H1 (cell line): ENCODE measurements at regions of chr17 and their contacts with region 1.

Region 1: DNA sequence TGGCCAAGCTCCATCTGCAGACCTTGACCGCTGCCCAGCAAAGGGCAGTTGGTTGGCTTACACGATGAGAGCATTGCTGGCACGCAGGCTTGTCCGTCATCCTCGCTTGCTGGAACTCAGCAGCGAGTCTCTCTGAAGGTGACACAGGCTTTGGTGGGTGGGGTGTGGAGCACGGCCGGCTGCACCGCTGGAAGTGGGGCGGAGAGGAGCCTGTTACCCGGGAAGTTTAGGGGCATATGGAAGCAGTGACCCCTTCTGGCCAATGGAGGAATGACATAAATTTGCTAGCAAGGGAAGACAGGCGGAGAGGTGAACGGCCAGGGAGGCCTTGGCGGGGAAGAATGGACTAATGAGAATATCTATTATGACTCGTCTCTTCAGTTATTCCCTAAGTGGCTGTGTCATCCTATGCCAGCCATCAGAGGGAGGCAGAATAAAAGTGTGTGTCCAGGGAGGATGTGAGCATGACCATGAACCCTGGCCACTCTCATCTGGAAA is 65.9 kb upstream of the SDK2 start:
- DNase-seq: peak; percentile 39 to 93
- H3K4me3 ChIP-seq: no peak overlapping the region; a peak in 1 of 8 replicates
- H3K27ac ChIP-seq: no peak overlapping the region
- H3K4me1 ChIP-seq: peaks cover 0 to 4% (median 3%) of the 10 kb centered on the region in 4 experiments; a peak in 5 of 7 replicates
- H3K27me3 ChIP-seq: peaks cover 0 to 4% (median under 1%) of the 10 kb centered on the region in 4 experiments; a peak in 3 of 7 replicates
- CTCF ChIP-seq: peak; percentile 76 to 89 (median 85)
- EP300 ChIP-seq: no peak
- POLR2A ChIP-seq: no peak
- RAD21 ChIP-seq: peak; percentile 93 to 95

Region 2: DNA sequence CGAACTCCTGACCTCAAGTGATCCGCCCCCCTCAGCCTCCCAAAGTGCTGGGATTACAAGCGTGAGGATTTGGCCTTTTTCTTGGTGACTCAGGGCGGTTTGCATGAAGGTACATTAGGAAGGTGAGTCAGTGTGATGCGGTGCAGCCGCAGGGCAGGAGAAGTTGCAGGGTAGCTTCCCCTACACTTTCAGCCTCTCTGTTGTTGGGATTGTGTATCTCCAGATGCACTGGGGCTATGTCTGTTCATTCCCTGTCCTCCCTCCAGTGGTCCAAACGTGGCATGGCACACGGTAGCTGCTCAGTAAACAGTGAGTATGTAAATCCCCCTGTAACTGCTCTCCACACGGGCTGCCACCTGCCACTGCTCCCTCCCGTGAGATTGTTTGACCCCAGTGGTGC is 289.2 kb before region 1 on chr17:
- CTCF ChIA-PET with region 1: interaction called, 11 read pairs
- POLR2A ChIA-PET with region 1: no interaction called
- DNase-seq: no peak
- H3K4me3 ChIP-seq: no peak overlapping the region
- H3K27ac ChIP-seq: no peak overlapping the region
- H3K4me1 ChIP-seq: no peaks in the 10 kb centered on the region
- H3K27me3 ChIP-seq: no peaks in the 10 kb centered on the region
- CTCF ChIP-seq: peak; percentile 18 to 54 (median 52); a peak in 3 of 4 replicates
- EP300 ChIP-seq: no peak
- POLR2A ChIP-seq: no peak
- RAD21 ChIP-seq: peak; percentile 25 to 50

Region 3: DNA sequence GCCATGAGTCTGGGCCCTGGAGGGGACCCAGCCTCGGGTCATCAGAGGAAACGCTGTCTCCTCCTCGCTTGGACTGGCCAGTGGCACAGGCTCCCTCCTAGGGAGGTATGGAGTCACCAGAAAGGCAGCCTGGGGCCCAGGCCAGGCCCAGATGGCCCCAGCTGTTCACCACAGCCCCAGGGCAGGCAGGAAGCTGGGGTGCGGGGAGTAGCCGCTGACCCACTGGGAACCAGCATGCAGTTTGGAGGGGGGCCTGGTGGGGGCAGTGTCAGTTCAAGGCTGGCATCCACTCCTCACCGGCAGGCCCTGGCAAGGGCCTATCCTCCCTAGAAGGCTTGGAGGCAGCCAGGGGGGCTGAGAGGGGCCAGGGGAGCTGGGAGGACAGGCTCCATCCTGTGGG is 114.7 kb before region 1 on chr17:
- CTCF ChIA-PET with region 1: interaction called, 10 read pairs
- POLR2A ChIA-PET with region 1: no interaction called
- DNase-seq: peak in 1 of 2 experiments; percentile 85
- H3K4me3 ChIP-seq: no peak overlapping the region
- H3K27ac ChIP-seq: no peak overlapping the region
- H3K4me1 ChIP-seq: peaks cover 0 to 5% (median 2%) of the 10 kb centered on the region in 4 experiments; a peak in 5 of 7 replicates
- H3K27me3 ChIP-seq: no peaks in the 10 kb centered on the region
- CTCF ChIP-seq: peak; percentile 68 to 74 (median 71)
- EP300 ChIP-seq: no peak
- POLR2A ChIP-seq: no peak
- RAD21 ChIP-seq: peak; percentile 76 to 87

Region 4: GRCh38 chr17:73690676-73691075 is 19.5 kb before region 1 on chr17:
- CTCF ChIA-PET with region 1: interaction called, 33 read pairs
- POLR2A ChIA-PET with region 1: no interaction called
- DNase-seq: peak in 1 of 2 experiments; percentile 47
- H3K4me3 ChIP-seq: no peak overlapping the region
- H3K27ac ChIP-seq: no peak overlapping the region
- H3K4me1 ChIP-seq: peaks cover 2 to 17% (median 8%) of the 10 kb centered on the region in 4 experiments; a peak in 5 of 7 replicates
- H3K27me3 ChIP-seq: no peaks in the 10 kb centered on the region; a peak in 1 of 7 replicates
- CTCF ChIP-seq: no peak
- EP300 ChIP-seq: no peak
- POLR2A ChIP-seq: no peak
- RAD21 ChIP-seq: no peak

Region 5: GRCh38 chr17:73782641-73783381 is 72.7 kb after region 1 on chr17:
- CTCF ChIA-PET with region 1: interaction called, 19 read pairs
- POLR2A ChIA-PET with region 1: no interaction called
- DNase-seq: no peak
- H3K4me3 ChIP-seq: no peak overlapping the region
- H3K27ac ChIP-seq: no peak overlapping the region
- H3K4me1 ChIP-seq: peaks cover 7 to 32% (median 16%) of the 10 kb centered on the region in 4 experiments
- H3K27me3 ChIP-seq: no peaks in the 10 kb centered on the region; a peak in 1 of 7 replicates
- CTCF ChIP-seq: peak; percentile 70 to 87 (median 86)
- EP300 ChIP-seq: no peak
- POLR2A ChIP-seq: no peak
- RAD21 ChIP-seq: peak; percentile 80 to 90

Region 6: DNA sequence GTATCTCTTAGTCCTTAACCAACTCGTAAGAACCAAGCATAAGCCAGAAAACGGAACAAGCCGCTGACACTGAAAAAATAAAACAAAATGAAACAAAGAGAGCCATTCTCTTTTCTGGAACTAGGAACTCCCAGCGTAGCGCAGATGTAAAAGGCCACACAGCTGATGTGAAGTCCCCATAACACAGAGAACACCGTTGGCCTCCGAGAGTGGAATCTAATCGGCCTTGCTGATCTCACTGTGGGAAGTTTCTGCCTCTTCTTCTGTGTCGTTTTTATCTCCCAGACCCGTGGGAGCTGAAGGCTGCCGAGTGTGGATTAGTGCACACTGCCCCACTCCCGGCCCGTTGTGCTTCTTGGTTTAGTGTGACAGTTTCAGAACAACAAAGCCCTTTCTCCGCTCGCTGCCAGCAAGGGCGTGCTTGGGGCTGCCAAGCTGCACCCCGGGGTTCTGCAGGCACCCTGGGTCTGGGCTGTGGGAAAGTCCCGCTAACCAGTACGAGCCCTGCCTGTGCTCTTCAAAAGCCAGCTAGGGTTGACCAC is 525.0 kb after region 1 on chr17:
- CTCF ChIA-PET with region 1: no interaction called
- POLR2A ChIA-PET with region 1: no interaction called
- DNase-seq: no peak
- H3K4me3 ChIP-seq: no peak overlapping the region
- H3K27ac ChIP-seq: no peak overlapping the region
- H3K4me1 ChIP-seq: peaks cover 0 to 13% (median 7%) of the 10 kb centered on the region in 4 experiments; a peak in 5 of 7 replicates
- H3K27me3 ChIP-seq: no peaks in the 10 kb centered on the region
- CTCF ChIP-seq: no peak
- EP300 ChIP-seq: no peak
- POLR2A ChIP-seq: no peak
- RAD21 ChIP-seq: no peak